Panc1 (cell line): ENCODE measurements at regions of chr2 and their contacts with region 1.

Region 1: GRCh38 chr2:152740743-152741328 is 22.4 kb downstream of the ARL6IP6 start:
- DNase-seq: peak; percentile 42
- ATAC-seq: no peak
- H3K4me3 ChIP-seq: no peak overlapping the region
- H3K27ac ChIP-seq: no peak overlapping the region
- H3K4me1 ChIP-seq: no peaks in the 10 kb centered on the region
- H3K27me3 ChIP-seq: no peaks in the 10 kb centered on the region
- CTCF ChIP-seq: peak; percentile 73; the same call in 1 of the 2 replicates

Region 2: GRCh38 chr2:152715850-152716428 is 24.9 kb before region 1 on chr2:
- CTCF ChIA-PET with region 1: interaction called, 10 read pairs
- POLR2A ChIA-PET with region 1: no interaction called
- in situ Hi-C with region 1: no loop called
- intact Hi-C with region 1: no loop called
- DNase-seq: no peak
- ATAC-seq: no peak
- H3K4me3 ChIP-seq: peak overlapping the region; percentile 66 to 96
- H3K27ac ChIP-seq: peak overlapping the region; percentile 98
- H3K4me1 ChIP-seq: peaks cover 32% of the 10 kb centered on the region
- H3K27me3 ChIP-seq: no peaks in the 10 kb centered on the region
- CTCF ChIP-seq: peak; percentile 87

Region 3: GRCh38 chr2:153106802-153107477 is 366.1 kb after region 1 on chr2:
- CTCF ChIA-PET with region 1: interaction called, 11 read pairs
- POLR2A ChIA-PET with region 1: no interaction called
- in situ Hi-C with region 1: no loop called
- intact Hi-C with region 1: no loop called
- DNase-seq: no peak
- ATAC-seq: no peak
- H3K4me3 ChIP-seq: peak overlapping the region; percentile 9 to 11; a peak in 2 of 4 replicates
- H3K27ac ChIP-seq: no peak overlapping the region
- H3K4me1 ChIP-seq: no peaks in the 10 kb centered on the region
- H3K27me3 ChIP-seq: no peaks in the 10 kb centered on the region
- CTCF ChIP-seq: no peak